Activated T-helper 2 cell treated with anti-CD3 and anti-CD28 coated beads, Interferon-gamma antibody, Interleukin-2, Interleukin-4, amounts not matched to agents 10 μg/mL and 5 μg/mL and 100 μg/mL, durations not matched to agents 14 hours and 24 hours and 36 hours (primary cell): ENCODE measurements at regions of chr1 and their contacts with region 1.

Region 1: GRCh38 chr1:241611063-241611462 is 29.1 kb downstream of the CHML start:
- DNase-seq: no peak
- H3K4me3 Mint-ChIP-seq: no peak overlapping the region
- H3K27ac Mint-ChIP-seq: no peak overlapping the region
- H3K4me1 Mint-ChIP-seq: peaks cover 22% of the 10 kb centered on the region
- H3K27me3 Mint-ChIP-seq: no peaks in the 10 kb centered on the region

Region 2: GRCh38 chr1:241627453-241628259 is 16.6 kb after region 1 on chr1:
- intact Hi-C with region 1: loop called (anchors 1 kb)
- DNase-seq: no peak
- H3K4me3 Mint-ChIP-seq: peak overlapping the region; percentile 27
- H3K27ac Mint-ChIP-seq: peak overlapping the region; percentile 39
- H3K4me1 Mint-ChIP-seq: peaks cover 14% of the 10 kb centered on the region
- H3K27me3 Mint-ChIP-seq: no peaks in the 10 kb centered on the region

Region 3: GRCh38 chr1:241847796-241848685 is 237.0 kb after region 1 on chr1 and contains the start of gene EXO1:
- intact Hi-C with region 1: loop called (anchors 2 kb)
- DNase-seq: peak; percentile 86
- H3K4me3 Mint-ChIP-seq: peak within 1 kb of the TSS; percentile 98
- H3K27ac Mint-ChIP-seq: peak within 1 kb of the TSS; percentile 100
- H3K4me1 Mint-ChIP-seq: peaks cover 26% of the 10 kb centered on the region
- H3K27me3 Mint-ChIP-seq: peaks cover 7% of the 10 kb centered on the region
- total RNA-seq, gene EXO1: 49.2 and 52.5 TPM in 2 replicates

Region 4: DNA sequence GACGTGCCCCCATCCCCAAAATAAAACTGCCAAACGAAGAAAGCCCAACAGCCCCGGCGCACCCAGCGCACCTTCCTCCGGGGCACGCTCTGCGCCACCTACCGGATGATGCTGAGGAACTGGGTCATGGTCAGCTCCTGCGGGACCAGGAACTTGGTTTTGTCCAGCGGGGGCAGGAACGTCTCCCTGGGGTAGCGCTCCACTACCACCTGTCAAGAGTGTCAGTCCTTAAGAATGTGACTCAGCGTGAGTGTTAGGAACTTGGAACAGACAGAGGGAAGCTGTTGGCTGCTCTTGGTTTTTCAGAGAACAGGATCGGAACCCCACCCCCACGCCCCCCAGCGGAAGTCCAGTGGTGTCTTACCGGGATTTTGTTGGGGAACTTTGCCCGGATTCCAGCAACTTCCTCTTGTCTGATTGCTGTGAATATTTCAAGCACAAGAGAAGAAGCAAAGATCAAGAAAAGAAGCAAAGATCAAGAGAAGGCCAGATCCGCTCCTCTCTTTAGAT is 387.4 kb after region 1 on chr1:
- intact Hi-C with region 1: loop called (anchors 2 kb)
- DNase-seq: peak; percentile 26
- H3K4me3 Mint-ChIP-seq: peak overlapping the region; percentile 68
- H3K27ac Mint-ChIP-seq: no peak overlapping the region
- H3K4me1 Mint-ChIP-seq: peaks cover 6% of the 10 kb centered on the region
- H3K27me3 Mint-ChIP-seq: no peaks in the 10 kb centered on the region